ENCODE measurements at regions of chr21 and their contacts with region 1.

Region 1: DNA sequence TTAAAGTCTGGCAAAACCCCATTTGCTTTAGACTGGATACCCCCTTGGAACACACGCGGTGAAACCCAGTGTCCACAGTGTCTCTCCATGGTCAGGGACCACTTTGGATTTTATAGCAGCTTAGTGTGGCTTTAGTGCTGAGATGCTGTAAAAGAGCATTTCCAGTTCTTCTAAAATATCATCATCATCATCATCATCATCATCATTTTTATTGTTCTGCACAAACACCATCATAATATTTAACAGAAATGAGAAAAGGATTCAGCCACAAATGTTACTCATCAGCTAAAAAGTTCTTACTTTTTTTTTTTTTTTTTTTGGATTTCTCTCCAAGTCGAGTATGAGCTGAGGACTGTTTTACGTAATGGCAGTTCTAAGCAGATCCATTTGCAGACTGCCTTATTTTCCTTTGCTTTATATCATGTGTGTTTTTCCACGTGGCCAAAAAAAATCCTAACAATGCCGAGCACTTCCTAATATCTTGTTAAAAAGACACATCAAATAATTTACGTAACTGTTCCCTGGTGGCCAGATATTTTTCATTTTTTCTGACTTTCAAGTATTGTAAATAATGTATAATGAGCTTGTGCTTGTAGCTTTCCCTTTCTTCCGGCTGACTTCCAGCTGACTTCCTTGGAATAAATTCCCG is 62.8 kb downstream of the EVA1C start:
- DNase-seq: peak in 1 of 2 experiments; percentile 46
- ATAC-seq: 0 out of 6 replicates have a peak, but pooled peaks of 1 of the 2 experiments have one; percentile 24
- H3K4me3 ChIP-seq: no peak overlapping the region
- H3K27ac ChIP-seq: peak overlapping the region; percentile 75 to 88
- H3K4me1 ChIP-seq: peaks cover 49% of the 10 kb centered on the region
- CTCF ChIP-seq: no peak
- EP300 ChIP-seq: 0 out of 5 replicates have a peak, but pooled peaks of 1 of the 2 experiments have one; percentile 36
- POLR2A ChIP-seq: no peak
- RAD21 ChIP-seq: no peak

Region 2: DNA sequence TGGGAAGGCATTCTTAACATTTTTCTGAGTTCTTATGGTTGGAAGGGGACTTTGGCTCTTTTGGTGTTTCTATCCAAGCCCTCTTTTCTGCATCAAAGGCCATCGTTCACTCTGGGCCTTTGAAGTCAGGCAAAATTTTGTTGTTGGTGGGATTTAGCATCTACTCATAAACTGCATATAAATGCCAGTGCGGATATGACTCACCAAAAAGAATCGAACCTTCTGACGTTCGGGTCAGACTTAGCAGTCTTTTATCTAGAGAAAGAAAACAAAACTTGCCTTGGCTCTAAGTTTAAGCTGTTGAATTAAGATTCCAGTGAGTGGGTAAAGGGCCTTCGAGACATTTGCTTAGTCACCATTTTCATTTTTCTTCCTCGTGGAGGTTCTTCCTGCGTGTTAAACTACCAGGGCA is 11.4 kb before region 1 on chr21:
- CTCF ChIA-PET with region 1: interaction called, 4 read pairs
- POLR2A ChIA-PET with region 1: interaction called, 10 read pairs
- DNase-seq: peak in 1 of 2 experiments; percentile 90
- ATAC-seq: peak; percentile 81 to 85
- H3K4me3 ChIP-seq: no peak overlapping the region
- H3K27ac ChIP-seq: peak overlapping the region; percentile 97 to 99
- H3K4me1 ChIP-seq: peaks cover 76% of the 10 kb centered on the region
- CTCF ChIP-seq: no peak
- EP300 ChIP-seq: peak; percentile 57 to 88; a peak in 4 of 5 replicates
- POLR2A ChIP-seq: no peak
- RAD21 ChIP-seq: no peak

Measured in A549 (cell line).